ENCODE measurements at regions of chr5 and their contacts with region 1.

Region 1: DNA sequence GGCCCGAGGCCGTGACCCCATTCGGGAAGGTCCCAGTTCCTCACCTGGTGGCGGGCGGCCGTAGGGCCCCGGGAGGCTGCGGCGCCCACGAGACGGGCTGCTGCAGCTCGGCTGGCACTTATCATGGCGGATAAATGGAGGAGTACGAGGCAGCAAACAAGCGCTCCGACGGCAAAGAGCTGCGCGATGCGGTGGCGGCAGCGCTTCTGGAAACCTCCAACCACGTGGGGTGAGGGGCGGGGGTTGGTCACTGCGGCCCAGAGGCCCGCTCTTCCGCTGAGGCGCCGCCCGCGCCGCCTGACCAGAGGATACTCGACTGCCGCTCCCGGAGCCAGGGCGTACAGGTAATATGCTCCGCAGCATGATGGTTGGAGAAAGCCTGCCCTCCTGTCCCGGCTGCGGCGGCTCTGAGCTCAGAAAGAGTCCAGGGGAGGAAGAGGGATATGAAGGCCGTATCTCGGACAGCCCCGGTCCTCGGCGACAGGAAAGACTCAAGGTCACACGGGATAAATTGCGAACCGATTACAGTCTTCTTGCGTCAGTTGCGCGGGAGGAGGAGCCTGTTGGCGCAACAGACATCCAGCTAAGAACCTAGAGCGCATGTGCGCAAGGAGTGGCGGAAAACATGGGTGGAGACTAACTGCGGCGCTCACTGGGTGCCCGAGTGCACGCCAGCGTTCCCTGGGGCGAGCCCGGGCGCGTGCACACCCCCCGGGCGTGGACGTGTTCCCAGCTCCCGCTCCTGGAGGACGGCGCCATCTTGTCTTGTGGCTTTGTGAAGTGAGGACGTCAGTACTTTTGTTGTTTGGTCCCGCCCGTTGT is at the start of gene HSPA9:
- DNase-seq: peak; percentile 97
- H3K4me3 Mint-ChIP-seq: peak within 1 kb of the TSS; percentile 95
- H3K27ac Mint-ChIP-seq: peak within 1 kb of the TSS; percentile 100
- H3K4me1 Mint-ChIP-seq: peaks cover 22% of the 10 kb centered on the region
- H3K27me3 Mint-ChIP-seq: no peaks in the 10 kb centered on the region
- total RNA-seq, gene HSPA9: 372 and 383 TPM in 2 replicates

Region 2: DNA sequence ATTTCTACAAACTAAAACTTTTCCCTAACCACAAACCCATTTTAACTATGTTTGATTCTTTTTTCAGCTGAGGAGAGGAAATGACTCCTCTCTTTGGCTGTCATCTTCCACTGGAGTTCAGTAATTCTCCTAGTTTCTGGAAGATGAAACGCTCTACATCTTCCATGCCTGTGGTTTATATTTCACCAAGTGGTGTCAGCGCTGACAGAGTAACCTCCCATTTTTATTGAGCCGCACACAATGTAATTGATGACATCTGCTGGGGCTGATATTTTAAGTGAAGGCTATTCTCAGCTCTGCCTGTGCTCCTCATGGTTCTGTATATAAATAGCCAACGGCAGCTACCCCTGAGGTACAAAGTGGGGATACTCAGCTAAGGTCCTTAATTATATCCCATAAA is 1310.8 kb before region 1 on chr5:
- intact Hi-C with region 1: no loop called
- DNase-seq: no peak
- H3K4me3 Mint-ChIP-seq: no peak overlapping the region
- H3K27ac Mint-ChIP-seq: no peak overlapping the region
- H3K4me1 Mint-ChIP-seq: no peaks in the 10 kb centered on the region
- H3K27me3 Mint-ChIP-seq: peaks cover 4% of the 10 kb centered on the region

Region 3: GRCh38 chr5:138331449-138332368 is 243.7 kb before region 1 on chr5 and contains the start of gene CDC25C:
- intact Hi-C with region 1: loop called (anchors 10 kb)
- DNase-seq: peak; percentile 97
- H3K4me3 Mint-ChIP-seq: peak within 1 kb of the TSS; percentile 85
- H3K27ac Mint-ChIP-seq: peak within 1 kb of the TSS; percentile 82
- H3K4me1 Mint-ChIP-seq: peaks cover 24% of the 10 kb centered on the region
- H3K27me3 Mint-ChIP-seq: no peaks in the 10 kb centered on the region
- total RNA-seq, gene CDC25C: 5.3 and 5.6 TPM in 2 replicates

Region 4: GRCh38 chr5:138601444-138601843 is 26.0 kb after region 1 on chr5:
- intact Hi-C with region 1: loop called (anchors 1 kb)
- DNase-seq: no peak
- H3K4me3 Mint-ChIP-seq: no peak overlapping the region
- H3K27ac Mint-ChIP-seq: no peak overlapping the region
- H3K4me1 Mint-ChIP-seq: peaks cover 20% of the 10 kb centered on the region
- H3K27me3 Mint-ChIP-seq: peaks cover 74% of the 10 kb centered on the region

Region 5: DNA sequence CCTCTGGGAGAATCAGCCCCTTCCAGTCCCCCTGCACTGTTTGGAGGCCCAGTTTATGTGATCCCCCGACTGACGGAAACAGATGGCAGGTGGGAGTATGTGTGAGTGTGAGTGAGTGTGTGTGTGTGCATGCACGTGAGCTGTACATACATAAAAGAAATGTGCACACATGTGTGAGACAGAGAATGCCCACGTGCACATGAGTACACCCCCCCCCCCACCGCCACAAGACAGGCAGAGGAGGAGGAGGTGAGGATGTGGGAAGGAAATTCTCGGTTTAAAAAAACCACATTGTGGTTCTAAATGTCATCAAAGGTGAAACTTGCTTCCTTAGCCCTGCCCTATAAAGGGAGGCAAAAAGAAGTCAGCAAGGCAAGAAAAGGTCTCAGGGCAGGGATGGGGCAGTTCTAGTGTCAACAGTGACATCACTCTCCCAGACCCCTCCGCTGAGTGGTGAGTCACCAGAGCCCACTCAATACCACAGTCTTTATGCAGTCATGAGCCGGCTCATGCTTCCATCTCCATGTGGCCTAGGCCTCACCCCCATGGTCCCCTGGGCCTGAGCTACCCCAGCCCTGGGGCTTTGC is 79.0 kb after region 1 on chr5:
- intact Hi-C with region 1: loop called (anchors 5 kb)
- DNase-seq: peak; percentile 50
- H3K4me3 Mint-ChIP-seq: peak overlapping the region; percentile 54
- H3K27ac Mint-ChIP-seq: peak overlapping the region; percentile 81
- H3K4me1 Mint-ChIP-seq: peaks cover 19% of the 10 kb centered on the region
- H3K27me3 Mint-ChIP-seq: peaks cover 77% of the 10 kb centered on the region

Region 6: DNA sequence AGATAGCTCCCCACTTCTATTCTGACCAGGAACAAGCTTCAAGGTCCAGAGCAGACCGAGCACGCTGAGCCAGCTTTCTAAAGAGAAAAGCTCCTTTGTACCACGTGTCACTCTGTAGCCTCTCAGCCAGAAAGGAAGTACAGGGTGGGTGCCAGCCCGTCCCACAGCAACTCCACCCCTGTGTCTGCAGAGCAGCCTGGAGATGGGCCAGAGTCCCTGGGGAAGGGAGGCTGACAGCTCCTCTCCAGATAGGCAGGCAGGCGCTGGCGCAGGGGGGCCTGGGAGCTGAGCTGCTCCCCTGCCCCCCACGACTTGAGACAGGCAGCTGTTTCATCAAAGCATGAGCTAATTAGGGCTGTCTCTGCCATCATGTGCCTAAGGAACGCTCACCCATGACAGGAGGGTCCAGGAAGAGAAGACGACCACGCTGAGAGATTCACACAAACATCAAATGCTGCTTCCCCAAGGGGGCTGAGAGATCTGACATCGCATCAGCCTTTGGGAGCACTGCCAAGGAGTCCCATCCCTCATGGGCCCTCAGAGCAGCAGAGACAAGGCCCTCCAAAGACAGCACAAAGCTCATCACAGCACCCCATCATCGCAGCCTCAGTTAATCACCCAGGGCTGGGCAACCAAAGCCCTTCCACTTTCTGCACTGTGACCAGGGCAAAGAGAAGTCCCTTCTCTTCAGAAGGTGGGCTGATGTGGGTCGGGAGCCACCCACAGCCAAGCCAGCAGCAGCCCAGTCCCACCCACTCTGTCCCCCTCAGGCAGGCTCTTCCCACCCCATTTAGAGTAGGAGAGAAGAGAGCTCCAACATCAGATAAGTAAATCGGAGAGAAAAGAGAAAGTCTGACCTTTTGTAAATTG is 378.2 kb after region 1 on chr5:
- intact Hi-C with region 1: no loop called
- DNase-seq: no peak
- H3K4me3 Mint-ChIP-seq: no peak overlapping the region
- H3K27ac Mint-ChIP-seq: no peak overlapping the region
- H3K4me1 Mint-ChIP-seq: peaks cover 12% of the 10 kb centered on the region
- H3K27me3 Mint-ChIP-seq: no peaks in the 10 kb centered on the region

Region 7: GRCh38 chr5:139197710-139198669 is 622.6 kb after region 1 on chr5 and contains the start of gene SIL1:
- intact Hi-C with region 1: loop called (anchors 1 kb)
- DNase-seq: peak; percentile 94
- H3K4me3 Mint-ChIP-seq: peak within 1 kb of the TSS; percentile 90
- H3K27ac Mint-ChIP-seq: peak within 1 kb of the TSS; percentile 89
- H3K4me1 Mint-ChIP-seq: peaks cover 32% of the 10 kb centered on the region
- H3K27me3 Mint-ChIP-seq: no peaks in the 10 kb centered on the region
- total RNA-seq, gene SIL1: 28.6 and 41.1 TPM in 2 replicates

Region 8: DNA sequence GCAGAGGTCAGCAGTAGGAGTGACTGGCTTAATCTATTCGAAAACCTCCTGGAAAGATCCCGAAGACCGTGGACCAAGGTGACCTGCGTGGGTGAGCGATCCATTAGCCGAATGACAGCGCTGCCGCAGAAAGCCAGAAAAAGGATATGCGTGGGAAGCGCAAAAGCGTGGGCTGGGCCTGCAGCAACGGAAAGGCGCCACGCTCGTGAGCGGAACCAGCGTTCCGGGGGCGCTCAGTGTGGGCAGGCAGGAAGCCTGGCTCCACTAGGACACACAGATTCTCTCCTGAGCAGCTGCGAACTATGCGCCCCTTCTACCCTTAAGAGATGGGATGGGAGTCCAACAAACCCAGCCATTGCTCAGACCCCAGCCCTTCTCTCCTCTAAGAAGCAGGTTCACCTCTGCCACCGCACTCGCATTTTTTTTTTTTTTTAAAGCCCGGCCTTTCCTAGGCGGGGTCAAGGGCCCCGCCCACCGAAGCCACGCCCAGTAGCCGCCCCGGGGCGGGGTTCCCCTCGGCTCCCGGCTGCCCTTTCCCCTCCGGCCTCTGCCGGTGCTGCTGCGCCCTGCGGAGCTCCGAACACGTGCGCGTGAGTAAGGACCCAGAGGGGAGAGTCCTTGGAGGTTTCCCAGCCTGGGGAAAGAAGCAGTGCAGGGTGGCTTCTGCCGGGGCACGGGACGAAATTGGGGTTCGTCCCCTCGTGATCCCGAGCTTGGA is 698.3 kb after region 1 on chr5:
- intact Hi-C with region 1: loop called (anchors 1 kb)
- DNase-seq: peak; percentile 85
- H3K4me3 Mint-ChIP-seq: peak overlapping the region; percentile 96
- H3K27ac Mint-ChIP-seq: peak overlapping the region; percentile 82
- H3K4me1 Mint-ChIP-seq: peaks cover 50% of the 10 kb centered on the region
- H3K27me3 Mint-ChIP-seq: peaks cover 9% of the 10 kb centered on the region

Region 9: DNA sequence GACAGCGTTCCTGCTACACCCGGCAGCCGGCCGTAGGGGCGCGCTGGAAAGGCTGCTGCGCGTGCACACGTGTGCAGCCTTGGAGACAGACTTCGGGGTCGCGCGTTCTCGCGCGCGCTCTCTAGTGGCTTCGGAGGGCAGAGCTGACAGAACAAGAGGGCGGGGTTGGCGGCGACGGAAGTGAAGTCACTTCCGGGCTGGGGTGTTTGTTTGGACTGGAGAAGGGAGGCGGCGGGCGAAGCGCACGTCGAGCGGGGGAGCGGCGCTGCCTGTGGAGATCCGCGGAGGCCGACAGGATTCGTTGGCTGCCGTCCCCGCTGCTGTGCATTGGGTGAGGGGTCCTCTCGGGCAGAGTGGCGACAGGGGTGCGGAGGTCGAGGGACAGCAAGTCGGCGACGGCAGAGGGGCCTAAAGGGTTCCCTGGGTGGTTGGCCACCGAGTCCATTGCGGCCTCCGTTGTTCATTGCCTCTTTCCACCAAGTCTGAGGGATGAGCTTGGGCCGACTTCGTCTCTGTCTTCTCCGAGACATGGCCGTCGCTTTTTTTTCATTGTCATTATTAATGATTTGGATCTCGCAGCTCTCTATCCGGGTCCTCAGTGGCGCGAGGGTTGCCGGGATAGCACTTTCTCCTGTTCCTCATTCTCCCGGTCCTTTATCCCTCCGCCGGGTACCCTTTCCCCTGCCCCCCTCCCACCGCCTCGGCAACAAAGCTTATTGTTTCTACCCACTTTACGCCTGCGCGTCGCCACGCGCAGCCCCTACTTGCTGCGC is 766.4 kb after region 1 on chr5 and contains the start of gene PAIP2:
- intact Hi-C with region 1: loop called (anchors 1 kb)
- DNase-seq: peak; percentile 95
- H3K4me3 Mint-ChIP-seq: peak within 1 kb of the TSS; percentile 94
- H3K27ac Mint-ChIP-seq: peak within 1 kb of the TSS; percentile 95
- H3K4me1 Mint-ChIP-seq: peaks cover 46% of the 10 kb centered on the region
- H3K27me3 Mint-ChIP-seq: no peaks in the 10 kb centered on the region
- total RNA-seq, gene PAIP2: 88.4 and 97.3 TPM in 2 replicates